GM10248 (cell line): ENCODE measurements at regions of chr9 and their contacts with region 1.

Region 1: DNA sequence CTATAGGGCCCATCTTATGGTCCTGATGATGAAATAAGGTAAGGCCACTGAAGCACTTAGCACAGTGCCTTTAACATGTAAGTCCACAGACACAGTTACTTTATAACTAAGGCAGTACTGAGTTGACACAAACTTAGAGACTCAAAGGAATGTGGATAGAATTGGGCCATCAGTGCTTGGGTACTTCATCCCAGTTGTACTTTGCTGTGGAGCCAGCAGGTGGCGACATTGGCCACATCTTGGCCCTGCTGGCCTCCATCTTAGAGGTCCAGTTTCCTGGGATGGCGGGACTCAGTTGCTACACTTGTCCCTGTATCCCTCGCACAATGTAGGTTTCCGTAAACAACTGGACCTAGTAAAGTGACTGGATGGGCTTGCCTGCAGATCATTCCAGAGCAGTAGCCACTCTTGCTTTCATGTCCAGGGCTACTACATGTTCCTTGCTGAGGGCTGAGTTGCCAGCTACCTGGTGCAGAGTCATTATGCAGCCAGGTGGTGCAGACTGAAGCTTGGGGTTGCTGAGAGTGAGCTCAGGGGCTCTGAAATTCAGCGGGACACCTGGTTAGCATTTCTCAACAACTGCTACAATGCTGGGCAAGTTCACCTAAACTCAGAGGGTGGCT is 10.6 kb downstream of the MTAP start:
- DNase-seq: peak; percentile 62
- CTCF ChIP-seq: peak; percentile 90

Region 2: DNA sequence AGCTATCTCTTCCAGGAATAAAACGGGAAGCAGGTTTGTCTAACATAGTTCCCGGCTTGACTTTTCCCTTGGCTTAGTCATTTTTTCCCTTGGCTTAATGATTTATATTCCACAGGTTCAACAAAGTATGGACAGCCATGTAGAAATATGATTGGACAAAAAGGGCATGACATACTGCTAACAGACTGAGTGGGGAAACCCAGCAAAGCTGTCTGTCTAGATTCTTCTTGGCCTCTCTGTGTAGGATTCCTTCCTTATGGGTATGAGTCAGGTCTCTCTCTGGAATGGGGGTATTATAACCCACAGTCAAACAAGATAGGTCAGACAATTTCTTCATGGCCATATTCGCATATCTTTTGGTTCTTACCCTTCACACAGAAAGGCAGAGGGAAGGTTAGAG is 16.3 kb before region 1 on chr9:
- CTCF ChIA-PET with region 1: interaction called, 36 read pairs
- POLR2A ChIA-PET with region 1: no interaction called
- DNase-seq: no peak
- CTCF ChIP-seq: no peak

Region 3: DNA sequence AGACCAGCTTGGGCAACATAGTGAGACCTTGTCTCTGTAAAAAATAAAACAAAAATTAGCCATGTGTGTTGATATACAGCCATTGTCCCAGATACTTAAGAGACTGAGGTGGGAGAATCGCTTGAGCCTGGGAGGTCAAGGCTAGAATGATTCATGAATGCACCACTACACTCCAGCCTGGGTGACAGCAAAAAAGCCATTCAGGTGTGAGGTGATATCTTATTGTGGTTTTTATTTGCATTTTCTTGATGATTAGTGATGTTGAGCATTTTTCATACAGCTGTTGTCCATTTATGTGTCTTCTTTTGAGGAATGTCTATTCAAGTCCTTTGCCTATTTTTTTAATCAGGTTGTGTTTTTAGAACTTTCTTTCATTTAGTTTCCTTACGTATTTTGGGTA is 12.6 kb after region 1 on chr9:
- CTCF ChIA-PET with region 1: interaction called, 12 read pairs
- POLR2A ChIA-PET with region 1: no interaction called
- DNase-seq: no peak
- CTCF ChIP-seq: no peak

Region 4: GRCh38 chr9:22002038-22002437 is 189.0 kb after region 1 on chr9:
- CTCF ChIA-PET with region 1: interaction called, 142 read pairs
- POLR2A ChIA-PET with region 1: no interaction called
- DNase-seq: no peak
- CTCF ChIP-seq: no peak

Region 5: DNA sequence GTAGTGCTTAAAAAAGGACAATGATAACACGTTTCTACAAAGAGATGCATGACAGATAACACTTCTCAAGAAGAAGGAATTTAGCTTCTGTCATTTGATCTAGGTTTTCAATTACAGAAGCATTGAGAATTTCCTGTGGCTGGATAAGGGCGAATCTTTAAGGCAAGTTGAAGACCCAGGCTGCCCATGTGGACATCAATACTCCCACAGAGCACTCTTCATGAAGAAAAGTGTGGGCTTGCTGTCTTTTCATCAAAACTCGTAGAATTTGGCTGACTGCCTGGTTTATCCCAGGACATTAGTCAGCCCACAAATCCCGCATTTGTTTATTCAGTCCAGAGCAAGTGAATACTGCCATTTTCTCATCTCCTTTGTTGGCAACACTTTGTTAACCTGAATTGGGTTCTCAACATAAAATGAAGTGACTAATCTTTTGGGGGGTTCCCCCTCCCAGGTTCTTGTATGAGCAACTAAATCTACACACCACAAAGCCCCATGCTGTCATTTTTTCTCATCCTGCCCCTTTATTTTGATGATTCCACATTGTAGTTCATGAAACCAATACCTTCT is 239.4 kb after region 1 on chr9:
- CTCF ChIA-PET with region 1: interaction called, 17 read pairs
- POLR2A ChIA-PET with region 1: no interaction called
- DNase-seq: no peak
- CTCF ChIP-seq: no peak

Region 6: GRCh38 chr9:22119537-22120158 is 306.6 kb after region 1 on chr9:
- CTCF ChIA-PET with region 1: interaction called, 56 read pairs
- POLR2A ChIA-PET with region 1: no interaction called
- DNase-seq: no peak
- CTCF ChIP-seq: peak; percentile 40

Region 7: GRCh38 chr9:22452415-22453010 is 639.5 kb after region 1 on chr9:
- CTCF ChIA-PET with region 1: interaction called, 21 read pairs
- POLR2A ChIA-PET with region 1: no interaction called
- DNase-seq: no peak
- CTCF ChIP-seq: peak; percentile 66